ENCODE measurements at regions of chr4 and their contacts with region 1.

Region 1: GRCh38 chr4:54228056-54228527 is 1.0 kb upstream of the PDGFRA start:
- DNase-seq: peak; percentile 70 to 75 (median 71)
- ATAC-seq: peak; percentile 61
- H3K4me3 ChIP-seq: no peak overlapping the region
- H3K4me1 ChIP-seq: peaks cover 46% of the 10 kb centered on the region
- CTCF ChIP-seq: peak; percentile 30

Region 2: GRCh38 chr4:53196882-53197771 is 1031.0 kb before region 1 on chr4:
- intact Hi-C with region 1: loop called (anchors 10 kb)
- DNase-seq: no peak
- ATAC-seq: peak; percentile 64
- H3K4me3 ChIP-seq: no peak overlapping the region
- H3K4me1 ChIP-seq: no peaks in the 10 kb centered on the region
- CTCF ChIP-seq: peak; percentile 47

Region 3: DNA sequence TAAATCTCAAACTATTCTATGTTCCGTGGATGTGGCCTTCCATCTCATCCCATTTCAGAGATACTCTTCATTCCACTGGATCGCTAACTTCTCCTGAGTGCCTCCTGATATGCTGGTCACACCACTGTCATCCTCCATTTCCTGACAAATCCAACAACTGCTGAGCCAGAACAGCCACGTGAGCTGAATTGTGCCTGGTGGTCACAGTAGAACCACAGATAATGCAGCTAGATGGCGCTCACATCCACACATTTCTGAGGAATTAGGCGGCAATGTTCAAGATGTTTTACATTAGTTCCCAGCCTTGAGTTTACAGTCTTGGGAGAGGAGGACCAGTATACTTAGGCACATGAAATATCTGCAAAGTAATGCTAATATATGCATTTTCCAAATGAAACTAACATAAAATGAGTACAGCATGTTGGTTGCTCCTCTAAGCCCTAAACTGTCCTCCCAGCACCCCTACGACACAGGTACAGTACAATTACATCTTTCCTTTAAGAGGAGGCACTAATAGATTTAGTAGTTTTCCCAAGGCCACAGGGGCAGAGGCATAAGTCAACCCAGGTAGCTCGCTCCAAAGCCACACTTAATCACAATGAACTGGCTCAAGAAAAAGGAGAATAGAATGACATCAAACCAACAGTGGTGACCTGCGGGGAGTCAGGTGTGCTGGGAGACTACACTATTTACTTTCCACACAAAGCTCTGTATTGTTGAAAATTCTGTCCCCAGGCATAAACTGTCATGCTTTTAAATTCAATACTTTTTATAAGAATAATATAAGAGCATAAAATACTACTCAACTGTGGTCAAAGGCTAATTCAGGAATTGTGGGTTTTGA is 297.9 kb before region 1 on chr4:
- intact Hi-C with region 1: loop called in 1 of 2 experiments (anchors 5 kb)
- DNase-seq: peak in 2 of 3 donors; percentile 36 to 93
- ATAC-seq: peak; percentile 84
- H3K4me3 ChIP-seq: no peak overlapping the region
- H3K4me1 ChIP-seq: no peaks in the 10 kb centered on the region
- CTCF ChIP-seq: peak; percentile 17

Region 4: GRCh38 chr4:54315561-54316538 is 87.8 kb after region 1 on chr4:
- intact Hi-C with region 1: no loop called
- DNase-seq: peak in 1 of 3 donors; percentile 18
- ATAC-seq: no peak
- H3K4me3 ChIP-seq: no peak overlapping the region
- H3K4me1 ChIP-seq: no peaks in the 10 kb centered on the region
- CTCF ChIP-seq: no peak

Region 5: DNA sequence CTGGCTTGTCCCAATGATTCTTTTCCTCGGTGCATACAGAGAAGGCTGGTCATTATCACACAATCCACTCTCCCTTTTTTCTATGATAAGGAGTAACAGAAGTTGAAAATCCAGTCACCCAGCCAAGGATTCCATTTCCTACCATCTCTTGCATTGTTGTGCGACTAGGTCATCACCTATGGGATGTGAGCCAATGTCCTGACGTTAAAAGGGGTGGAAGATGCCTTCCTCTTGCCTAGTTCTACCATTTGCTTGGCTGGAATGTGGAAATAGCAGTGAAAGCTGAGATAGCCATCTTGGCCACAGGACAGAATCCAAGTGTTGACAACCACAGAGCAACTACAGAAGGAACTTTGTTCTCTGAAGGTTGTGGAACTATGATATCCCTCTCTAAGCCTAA is 297.5 kb after region 1 on chr4:
- intact Hi-C with region 1: no loop called
- DNase-seq: no peak
- ATAC-seq: no peak
- H3K4me3 ChIP-seq: no peak overlapping the region
- H3K4me1 ChIP-seq: no peaks in the 10 kb centered on the region
- CTCF ChIP-seq: no peak

Measured in mucosa of descending colon (tissue), 3 donors.